ENCODE measurements at regions of chr17 and their contacts with region 1.

Region 1: DNA sequence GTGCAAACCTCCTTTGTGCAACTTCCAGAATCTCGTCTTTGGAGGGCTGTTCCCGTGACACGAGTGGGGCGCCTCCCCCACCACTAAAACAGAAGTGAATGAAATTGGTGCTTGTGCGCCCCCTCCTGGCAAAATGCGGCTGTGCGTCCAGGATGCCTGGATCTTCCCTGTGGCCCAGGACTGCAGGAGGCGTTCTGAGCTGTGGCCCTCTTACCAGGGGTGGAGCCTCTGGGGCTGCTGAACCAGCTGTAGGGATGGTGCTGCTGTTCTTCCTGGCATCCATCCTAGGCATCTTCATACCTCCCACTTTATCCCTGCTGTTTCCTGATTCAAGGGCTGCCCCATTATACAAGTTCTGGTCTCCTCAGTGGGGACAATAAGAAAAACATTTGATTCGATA is 18.5 kb upstream of the NAGLU start:
- DNase-seq: peak; percentile 78 to 84 (median 81)
- H3K4me3 ChIP-seq: no peak overlapping the region
- H3K4me3 Mint-ChIP-seq: no peak overlapping the region
- H3K27ac ChIP-seq: peak overlapping the region in 1 of 2 donors; percentile 68
- H3K27ac Mint-ChIP-seq: peak overlapping the region in 6 of 7 donors; percentile 38 to 93 (median 70)
- H3K4me1 ChIP-seq: peaks cover 36 to 38% of the 10 kb centered on the region in 2 donors
- H3K4me1 Mint-ChIP-seq: peaks cover 41% of the 10 kb centered on the region
- H3K27me3 ChIP-seq: no peaks in the 10 kb centered on the region
- H3K27me3 Mint-ChIP-seq: peaks cover 1 to 5% (median 3%) of the 10 kb centered on the region in 3 donors
- CTCF ChIP-seq: peak; percentile 97

Region 2: DNA sequence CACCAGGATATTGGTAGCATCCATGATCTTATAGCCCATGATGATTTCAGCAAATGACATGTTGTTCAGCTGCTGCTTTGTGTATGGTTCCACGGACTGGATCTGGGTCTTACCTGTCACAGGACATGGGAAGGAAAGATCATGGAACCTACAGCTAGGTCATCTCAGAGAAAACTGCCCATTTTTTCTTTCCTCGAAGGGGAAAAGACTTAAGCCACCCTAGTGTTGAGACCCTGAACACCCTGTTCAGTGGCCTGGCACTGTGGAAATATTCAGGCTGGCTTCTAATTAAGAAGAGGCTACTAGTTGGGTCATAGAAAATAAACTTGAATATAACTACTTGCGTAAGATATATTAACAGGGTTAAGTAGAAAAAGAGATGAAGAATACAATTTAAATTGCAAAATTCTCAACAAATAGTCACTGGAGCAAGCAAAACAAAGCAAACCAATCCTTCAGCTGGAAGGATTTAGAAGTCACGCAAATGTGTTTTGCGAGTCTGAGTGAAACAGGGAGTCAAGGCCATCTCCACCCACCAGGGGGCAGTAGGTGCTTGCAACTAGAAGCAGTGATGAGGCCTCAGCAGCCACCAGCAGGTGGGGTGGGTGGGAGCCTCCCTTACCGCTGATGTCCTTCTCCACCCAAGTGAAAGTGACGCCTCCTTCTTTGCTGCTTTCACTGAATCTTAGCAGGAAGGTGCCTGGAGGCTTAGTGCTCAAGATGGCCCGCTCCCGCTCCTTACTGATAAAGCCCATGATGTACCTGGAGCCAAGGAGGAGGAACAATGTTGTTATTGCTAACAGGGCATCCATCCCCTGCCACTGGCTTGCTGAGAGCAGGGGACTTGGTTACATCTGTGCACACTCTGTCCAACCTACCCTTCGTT is 194.9 kb before region 1 on chr17:
- intact Hi-C with region 1: loop called (anchors 5 kb)
- DNase-seq: peak; percentile 85 to 89 (median 89)
- H3K4me3 ChIP-seq: no peak overlapping the region
- H3K4me3 Mint-ChIP-seq: no peak overlapping the region
- H3K27ac ChIP-seq: no peak overlapping the region
- H3K27ac Mint-ChIP-seq: peak overlapping the region in 5 of 7 donors; percentile 28 to 61 (median 41)
- H3K4me1 ChIP-seq: peaks cover 3 to 6% of the 10 kb centered on the region in 2 donors
- H3K4me1 Mint-ChIP-seq: peaks cover 17% of the 10 kb centered on the region
- H3K27me3 ChIP-seq: no peaks in the 10 kb centered on the region
- H3K27me3 Mint-ChIP-seq: peaks cover 0 to 2% (median 0%) of the 10 kb centered on the region in 3 donors
- CTCF ChIP-seq: peak; percentile 100

Region 3: GRCh38 chr17:42428141-42428944 is 89.2 kb before region 1 on chr17:
- intact Hi-C with region 1: loop called (anchors 5 to 10 kb)
- DNase-seq: peak; percentile 34 to 52 (median 46)
- H3K4me3 ChIP-seq: no peak overlapping the region
- H3K4me3 Mint-ChIP-seq: no peak overlapping the region
- H3K27ac ChIP-seq: no peak overlapping the region
- H3K27ac Mint-ChIP-seq: no peak overlapping the region
- H3K4me1 ChIP-seq: peaks cover 5 to 10% of the 10 kb centered on the region in 2 donors
- H3K4me1 Mint-ChIP-seq: peaks cover 8% of the 10 kb centered on the region
- H3K27me3 ChIP-seq: peaks cover 7 to 22% of the 10 kb centered on the region in 2 donors
- H3K27me3 Mint-ChIP-seq: peaks cover 30 to 52% (median 33%) of the 10 kb centered on the region in 3 donors
- CTCF ChIP-seq: peak; percentile 78

Region 4: GRCh38 chr17:42459256-42459800 is 58.2 kb before region 1 on chr17:
- intact Hi-C with region 1: loop called in 1 of 2 experiments (anchors 5 kb)
- DNase-seq: peak in 1 of 3 donors; percentile 15
- H3K4me3 ChIP-seq: peak overlapping the region; percentile 80 to 96 (median 87)
- H3K4me3 Mint-ChIP-seq: peak overlapping the region; percentile 97 to 98
- H3K27ac ChIP-seq: peak overlapping the region; percentile 82 to 84
- H3K27ac Mint-ChIP-seq: peak overlapping the region; percentile 91 to 99 (median 97)
- H3K4me1 ChIP-seq: peaks cover 58 to 63% of the 10 kb centered on the region in 2 donors
- H3K4me1 Mint-ChIP-seq: peaks cover 60% of the 10 kb centered on the region
- H3K27me3 ChIP-seq: no peaks in the 10 kb centered on the region
- H3K27me3 Mint-ChIP-seq: peaks cover 0 to 2% (median 0%) of the 10 kb centered on the region in 3 donors
- CTCF ChIP-seq: peak; percentile 35